Lower leg skin (tissue), 4 donors: ENCODE measurements at regions of chr15 and their contacts with region 1.

Region 1: GRCh38 chr15:84023636-84024035 is 211.9 kb upstream of the GOLGA6L4 start:
- DNase-seq: no peak
- H3K4me3 ChIP-seq: no peak overlapping the region
- CTCF ChIP-seq: no peak
- POLR2A ChIP-seq: no peak

Region 2: GRCh38 chr15:83436458-83437158 is 587.0 kb before region 1 on chr15:
- intact Hi-C with region 1: loop called (anchors 10 kb)
- DNase-seq: no peak
- H3K4me3 ChIP-seq: no peak overlapping the region
- CTCF ChIP-seq: no peak
- POLR2A ChIP-seq: no peak

Region 3: DNA sequence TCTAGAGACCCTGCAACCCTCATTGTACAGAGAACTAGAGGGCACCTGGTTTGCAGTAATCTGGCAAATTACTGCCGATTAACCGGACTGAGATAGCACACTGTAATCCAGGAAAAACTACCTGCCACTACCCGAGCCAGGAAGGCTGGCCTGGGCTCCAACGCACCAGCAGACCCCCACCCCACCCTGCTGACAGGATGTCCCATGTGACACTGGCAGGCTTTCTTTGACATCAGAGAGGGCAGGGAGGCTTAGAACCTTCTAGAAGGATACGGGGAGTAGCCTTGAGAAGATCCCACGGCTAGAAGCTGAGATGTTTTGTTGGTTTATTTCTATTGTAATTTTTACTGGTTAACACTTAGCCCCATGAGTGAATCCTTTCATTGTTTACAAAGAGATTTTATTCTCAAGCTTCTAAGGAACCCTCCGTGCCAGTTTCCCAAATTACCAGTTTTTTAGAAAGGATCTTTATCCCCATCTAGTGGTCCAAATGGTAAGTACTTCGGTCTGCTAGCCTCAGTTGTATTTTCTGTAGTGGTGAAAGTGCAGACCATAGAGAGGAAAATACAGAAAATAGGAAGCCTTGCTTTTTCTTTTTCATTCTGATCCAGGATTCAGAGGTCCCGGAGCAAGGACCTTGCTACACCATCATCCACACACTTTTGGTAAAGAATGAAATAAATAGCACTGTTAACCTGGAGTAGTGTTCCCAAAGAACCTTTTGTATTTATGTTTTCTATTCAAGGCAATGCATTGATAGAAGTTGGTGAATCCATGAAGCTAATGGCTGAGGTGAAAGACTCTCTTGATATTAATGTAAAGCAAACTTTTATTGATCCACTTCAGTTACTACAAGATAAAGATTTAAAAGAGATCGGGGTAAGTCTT is 451.6 kb before region 1 on chr15:
- intact Hi-C with region 1: loop called (anchors 10 kb)
- DNase-seq: no peak
- H3K4me3 ChIP-seq: no peak overlapping the region
- CTCF ChIP-seq: no peak
- POLR2A ChIP-seq: no peak

Region 4: GRCh38 chr15:83992324-83993031 is 31.2 kb before region 1 on chr15:
- intact Hi-C with region 1: no loop called
- DNase-seq: no peak
- H3K4me3 ChIP-seq: no peak overlapping the region
- CTCF ChIP-seq: no peak
- POLR2A ChIP-seq: no peak